Pancreas (tissue), 10 donors: ENCODE measurements at regions of chr9 and their contacts with region 1.

Region 1: GRCh38 chr9:12719431-12719830 is 26.2 kb downstream of the TYRP1 start:
- DNase-seq: no peak
- ATAC-seq: peak in 3 of 4 donors; percentile 60 to 72 (median 71)
- H3K4me3 ChIP-seq: no peak overlapping the region
- H3K27ac ChIP-seq: no peak overlapping the region
- H3K4me1 ChIP-seq: no peaks in the 10 kb centered on the region
- H3K27me3 ChIP-seq: peaks cover 0 to 4% (median 0%) of the 10 kb centered on the region in 4 donors
- CTCF ChIP-seq: peak in 2 of 4 donors; percentile 12 to 39

Region 2: GRCh38 chr9:12516573-12516972 is 202.9 kb before region 1 on chr9:
- intact Hi-C with region 1: no loop called
- DNase-seq: no peak
- ATAC-seq: no peak
- H3K4me3 ChIP-seq: no peak overlapping the region
- H3K27ac ChIP-seq: no peak overlapping the region
- H3K4me1 ChIP-seq: no peaks in the 10 kb centered on the region
- H3K27me3 ChIP-seq: no peaks in the 10 kb centered on the region
- CTCF ChIP-seq: no peak

Region 3: GRCh38 chr9:12884737-12885414 is 165.4 kb after region 1 on chr9:
- intact Hi-C with region 1: loop called in 2 of 3 experiments (anchors 5 to 10 kb)
- DNase-seq: peak in 1 of 6 donors; percentile 11
- ATAC-seq: peak; percentile 68 to 93 (median 91)
- H3K4me3 ChIP-seq: no peak overlapping the region
- H3K27ac ChIP-seq: no peak overlapping the region
- H3K4me1 ChIP-seq: no peaks in the 10 kb centered on the region
- H3K27me3 ChIP-seq: no peaks in the 10 kb centered on the region
- CTCF ChIP-seq: peak in 2 of 4 donors; percentile 18 to 29

Region 4: GRCh38 chr9:13088720-13089427 is 369.4 kb after region 1 on chr9:
- intact Hi-C with region 1: loop called in 2 of 3 experiments (anchors 10 kb)
- DNase-seq: peak in 1 of 6 donors; percentile 12
- ATAC-seq: peak in 3 of 4 donors; percentile 77 to 86 (median 78)
- H3K4me3 ChIP-seq: no peak overlapping the region
- H3K27ac ChIP-seq: no peak overlapping the region
- H3K4me1 ChIP-seq: no peaks in the 10 kb centered on the region
- H3K27me3 ChIP-seq: no peaks in the 10 kb centered on the region
- CTCF ChIP-seq: peak; percentile 54 to 74 (median 66)